ENCODE measurements at regions of chrX and their contacts with region 1.

Region 1: DNA sequence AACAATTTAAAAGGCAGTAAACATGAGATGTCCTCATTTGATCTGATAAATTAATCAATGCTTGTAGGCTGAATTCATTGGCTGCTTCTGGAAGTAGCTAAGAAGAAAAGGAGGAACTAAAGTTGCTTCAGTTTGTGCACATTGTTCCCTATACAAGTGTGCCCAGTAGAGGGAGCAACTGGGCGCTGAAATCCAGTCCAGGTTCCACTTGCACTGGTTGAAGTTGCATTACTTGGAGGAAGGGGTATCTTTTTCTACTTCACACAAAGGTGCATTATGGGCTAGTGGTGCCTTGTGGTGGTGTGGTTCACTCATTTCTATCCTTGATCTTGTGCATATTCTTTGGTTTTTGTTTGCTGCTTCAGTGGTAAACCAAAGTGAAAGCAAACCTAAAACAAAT is 67.9 kb upstream of the SOX3 start:
- DNase-seq: peak; percentile 7
- ATAC-seq: peak; percentile 74
- H3K4me3 ChIP-seq: no peak overlapping the region
- H3K27ac ChIP-seq: no peak overlapping the region
- H3K4me1 ChIP-seq: no peaks in the 10 kb centered on the region
- H3K27me3 ChIP-seq: no peaks in the 10 kb centered on the region
- CTCF ChIP-seq: peak; percentile 60
- EP300 ChIP-seq: no peak
- POLR2A ChIP-seq: no peak
- RAD21 ChIP-seq: no peak

Region 2: DNA sequence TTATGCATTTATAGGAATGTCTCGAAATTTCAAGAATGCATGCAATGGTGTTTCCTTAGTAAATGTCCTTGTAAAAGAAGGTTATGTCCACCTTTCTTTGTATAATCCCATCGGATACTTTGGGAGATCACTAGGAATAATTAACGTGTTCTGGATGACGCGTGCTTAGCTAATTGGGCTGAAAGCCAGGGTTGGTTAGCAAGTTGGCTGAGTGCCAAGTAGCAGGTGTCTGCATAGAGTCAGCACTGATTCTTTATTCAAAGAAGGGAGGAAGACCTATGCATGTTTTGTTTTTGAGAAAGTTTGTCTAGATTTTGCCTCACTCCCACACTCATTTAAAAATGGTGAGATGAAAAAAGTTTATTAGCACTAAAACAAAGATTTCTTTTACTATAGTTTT is 212.4 kb before region 1 on chrX:
- CTCF ChIA-PET with region 1: no interaction called
- POLR2A ChIA-PET with region 1: no interaction called
- in situ Hi-C with region 1: no loop called
- intact Hi-C with region 1: no loop called
- DNase-seq: no peak
- ATAC-seq: no peak
- H3K4me3 ChIP-seq: no peak overlapping the region
- H3K27ac ChIP-seq: no peak overlapping the region
- H3K4me1 ChIP-seq: no peaks in the 10 kb centered on the region
- H3K27me3 ChIP-seq: no peaks in the 10 kb centered on the region
- CTCF ChIP-seq: no peak
- EP300 ChIP-seq: no peak
- POLR2A ChIP-seq: no peak
- RAD21 ChIP-seq: no peak

Region 3: DNA sequence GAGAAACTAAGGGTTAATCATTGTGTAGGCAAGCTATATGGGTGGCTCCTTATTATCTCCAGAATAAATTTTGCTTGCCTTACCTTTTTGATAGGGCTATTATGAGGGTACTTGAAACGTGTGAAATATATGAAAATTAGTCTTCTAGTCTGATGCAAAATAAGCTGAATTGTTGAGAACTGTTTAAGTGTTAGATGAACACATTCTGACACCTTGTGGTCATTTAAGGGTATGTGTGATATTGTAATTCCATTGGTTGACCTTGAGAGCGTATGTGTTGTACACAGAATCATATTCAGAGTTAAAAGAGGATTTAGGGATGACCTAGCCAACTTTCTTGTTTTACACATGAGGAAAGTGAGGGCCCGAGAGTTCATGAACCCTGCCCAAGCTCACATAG is 92.2 kb after region 1 on chrX:
- CTCF ChIA-PET with region 1: no interaction called
- POLR2A ChIA-PET with region 1: no interaction called
- in situ Hi-C with region 1: no loop called
- intact Hi-C with region 1: loop called (anchors 1 kb)
- DNase-seq: peak; percentile 15
- ATAC-seq: peak; percentile 55
- H3K4me3 ChIP-seq: no peak overlapping the region
- H3K27ac ChIP-seq: no peak overlapping the region
- H3K4me1 ChIP-seq: no peaks in the 10 kb centered on the region
- H3K27me3 ChIP-seq: no peaks in the 10 kb centered on the region; a peak in 1 of 5 replicates
- CTCF ChIP-seq: peak; percentile 37; the same call in 1 of the 2 replicates
- EP300 ChIP-seq: no peak
- POLR2A ChIP-seq: no peak
- RAD21 ChIP-seq: no peak